Caco-2 (cell line): ENCODE measurements at regions of chr2 and their contacts with region 1.

Region 1: GRCh38 chr2:236569573-236569973 is at the start of gene ACKR3:
- DNase-seq: peak; percentile 66 to 67
- H3K4me3 ChIP-seq: peak within 1 kb of the TSS; percentile 40
- H3K4me3 Mint-ChIP-seq: peak within 1 kb of the TSS; percentile 75
- H3K27ac Mint-ChIP-seq: no peak within 1 kb of the TSS
- H3K4me1 ChIP-seq: peaks cover 20% of the 10 kb centered on the region; the same call in 1 of the 2 replicates
- H3K4me1 Mint-ChIP-seq: no peaks in the 10 kb centered on the region
- H3K27me3 ChIP-seq: no peaks in the 10 kb centered on the region
- H3K27me3 Mint-ChIP-seq: no peaks in the 10 kb centered on the region
- CTCF ChIP-seq: peak in 1 of 2 experiments; percentile 47
- total RNA-seq, gene ACKR3: 3.2 and 3.9 TPM in 2 replicates

Region 2: GRCh38 chr2:236352761-236353593 is 216.6 kb before region 1 on chr2:
- CTCF ChIA-PET with region 1: interaction called, 3 read pairs
- POLR2A ChIA-PET with region 1: no interaction called
- intact Hi-C with region 1: loop called (anchors 1 kb)
- DNase-seq: no peak
- H3K4me3 ChIP-seq: no peak overlapping the region
- H3K4me3 Mint-ChIP-seq: no peak overlapping the region
- H3K27ac Mint-ChIP-seq: no peak overlapping the region
- H3K4me1 ChIP-seq: no peaks in the 10 kb centered on the region
- H3K4me1 Mint-ChIP-seq: no peaks in the 10 kb centered on the region
- H3K27me3 ChIP-seq: no peaks in the 10 kb centered on the region
- H3K27me3 Mint-ChIP-seq: peaks cover 5% of the 10 kb centered on the region
- CTCF ChIP-seq: peak; percentile 44 to 64

Region 3: DNA sequence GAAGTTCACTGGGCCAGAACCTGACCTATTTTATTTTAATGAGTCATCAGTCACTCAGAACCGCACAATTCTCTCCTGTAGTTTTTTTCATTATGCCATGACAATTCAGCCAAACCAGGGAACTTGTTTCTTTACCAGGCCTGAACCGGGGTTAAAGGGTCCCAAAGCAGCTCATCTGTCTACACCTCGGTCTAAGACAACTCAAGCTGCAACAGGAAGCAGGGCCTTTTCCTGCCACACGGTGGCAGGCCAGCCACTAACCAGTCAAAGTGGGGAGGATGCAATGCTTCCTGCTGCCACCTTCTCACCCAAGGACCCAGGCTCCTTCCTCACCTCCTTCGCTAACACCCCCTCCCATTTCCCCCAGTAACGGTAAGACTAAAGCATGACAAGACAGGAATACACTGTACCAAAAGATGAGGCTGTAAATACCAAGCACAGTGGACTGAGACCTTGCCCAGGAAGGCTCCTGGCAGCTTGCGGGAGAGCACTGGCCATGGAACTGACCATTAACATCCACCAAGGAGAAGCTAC is 56.6 kb before region 1 on chr2:
- CTCF ChIA-PET with region 1: interaction called, 22 read pairs
- POLR2A ChIA-PET with region 1: no interaction called
- intact Hi-C with region 1: loop called (anchors 1 kb)
- DNase-seq: peak; percentile 51 to 53
- H3K4me3 ChIP-seq: no peak overlapping the region
- H3K4me3 Mint-ChIP-seq: no peak overlapping the region
- H3K27ac Mint-ChIP-seq: no peak overlapping the region
- H3K4me1 ChIP-seq: no peaks in the 10 kb centered on the region
- H3K4me1 Mint-ChIP-seq: no peaks in the 10 kb centered on the region
- H3K27me3 ChIP-seq: no peaks in the 10 kb centered on the region
- H3K27me3 Mint-ChIP-seq: no peaks in the 10 kb centered on the region
- CTCF ChIP-seq: peak; percentile 67 to 68